Activated naive CD4-positive, alpha-beta T cell treated with anti-CD3 and anti-CD28 coated beads, Interleukin-2, amount 10 ng/mL, durations not matched to agents 7 days and 5 days (primary cell): ENCODE measurements at regions of chr17 and their contacts with region 1.

Region 1: GRCh38 chr17:57861000-57861789 is 11.4 kb upstream of the MRPS23 start:
- DNase-seq: peak; percentile 59
- H3K4me3 Mint-ChIP-seq: peak overlapping the region; percentile 62
- H3K27ac Mint-ChIP-seq: no peak overlapping the region
- H3K4me1 Mint-ChIP-seq: peaks cover 12% of the 10 kb centered on the region
- H3K27me3 Mint-ChIP-seq: peaks cover 74% of the 10 kb centered on the region

Region 2: GRCh38 chr17:57823469-57824401 is 37.5 kb before region 1 on chr17:
- CTCF ChIA-PET with region 1: no interaction called
- DNase-seq: no peak
- H3K4me3 Mint-ChIP-seq: no peak overlapping the region
- H3K27ac Mint-ChIP-seq: no peak overlapping the region
- H3K4me1 Mint-ChIP-seq: no peaks in the 10 kb centered on the region
- H3K27me3 Mint-ChIP-seq: peaks cover 16% of the 10 kb centered on the region

Region 3: DNA sequence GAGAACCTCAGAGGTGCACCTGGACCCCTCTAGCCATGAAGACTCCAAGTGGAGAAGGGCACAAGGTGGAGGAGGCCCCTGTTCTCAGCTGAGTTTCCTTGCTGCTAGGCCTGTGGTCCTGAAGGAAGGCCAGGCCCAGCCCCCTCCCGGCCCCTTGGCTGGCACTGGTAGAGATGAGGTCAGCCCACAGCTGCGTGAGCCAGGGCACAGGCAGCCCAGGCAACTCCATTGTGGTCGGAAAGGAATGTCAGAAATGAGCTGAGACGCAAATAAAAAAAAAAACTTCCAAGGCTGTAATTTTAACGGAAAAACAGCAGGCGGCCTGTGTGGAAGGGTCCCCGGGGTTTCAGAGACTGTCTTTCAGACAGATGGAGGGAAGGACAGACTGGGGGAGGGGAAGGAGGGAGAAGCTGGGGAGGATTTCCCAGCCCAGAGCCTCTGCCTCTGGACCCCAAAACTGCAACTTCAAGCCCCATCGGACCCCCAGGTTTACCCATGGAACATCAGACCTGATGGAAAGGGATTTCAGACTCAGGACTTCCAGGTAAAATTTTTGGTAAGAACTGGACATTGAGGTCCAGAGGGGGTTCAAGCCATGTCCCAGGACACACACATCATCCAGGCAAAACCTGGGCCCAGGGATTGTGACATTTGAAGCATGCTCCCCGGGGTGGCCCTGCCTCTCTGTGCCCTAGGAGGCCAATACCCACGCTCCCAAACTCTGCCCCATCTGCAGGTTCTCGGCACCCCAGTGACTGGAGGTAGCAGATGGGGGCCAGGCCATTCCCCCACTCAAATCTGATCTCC is 14.3 kb after region 1 on chr17:
- CTCF ChIA-PET with region 1: interaction called, 18 read pairs
- DNase-seq: no peak
- H3K4me3 Mint-ChIP-seq: no peak overlapping the region
- H3K27ac Mint-ChIP-seq: no peak overlapping the region
- H3K4me1 Mint-ChIP-seq: peaks cover 25% of the 10 kb centered on the region
- H3K27me3 Mint-ChIP-seq: peaks cover 99% of the 10 kb centered on the region